ENCODE measurements at regions of chr14 and their contacts with region 1.

Region 1: GRCh38 chr14:75002392-75003249 is at the start of gene EIF2B2:
- DNase-seq: peak; percentile 99
- H3K4me3 ChIP-seq: peak within 1 kb of the TSS; percentile 70 to 89
- H3K4me3 Mint-ChIP-seq: peak within 1 kb of the TSS; percentile 93 to 98 (median 97)
- H3K27ac ChIP-seq: peak within 1 kb of the TSS; percentile 80
- H3K27ac Mint-ChIP-seq: peak within 1 kb of the TSS; percentile 94 to 100 (median 99)
- H3K4me1 ChIP-seq: peaks cover 25% of the 10 kb centered on the region
- H3K4me1 Mint-ChIP-seq: peaks cover 30 to 48% (median 38%) of the 10 kb centered on the region in 4 donors
- H3K27me3 ChIP-seq: no peaks in the 10 kb centered on the region
- H3K27me3 Mint-ChIP-seq: no peaks in the 10 kb centered on the region
- total RNA-seq, gene EIF2B2: 31.3 to 31.7 TPM

Region 2: DNA sequence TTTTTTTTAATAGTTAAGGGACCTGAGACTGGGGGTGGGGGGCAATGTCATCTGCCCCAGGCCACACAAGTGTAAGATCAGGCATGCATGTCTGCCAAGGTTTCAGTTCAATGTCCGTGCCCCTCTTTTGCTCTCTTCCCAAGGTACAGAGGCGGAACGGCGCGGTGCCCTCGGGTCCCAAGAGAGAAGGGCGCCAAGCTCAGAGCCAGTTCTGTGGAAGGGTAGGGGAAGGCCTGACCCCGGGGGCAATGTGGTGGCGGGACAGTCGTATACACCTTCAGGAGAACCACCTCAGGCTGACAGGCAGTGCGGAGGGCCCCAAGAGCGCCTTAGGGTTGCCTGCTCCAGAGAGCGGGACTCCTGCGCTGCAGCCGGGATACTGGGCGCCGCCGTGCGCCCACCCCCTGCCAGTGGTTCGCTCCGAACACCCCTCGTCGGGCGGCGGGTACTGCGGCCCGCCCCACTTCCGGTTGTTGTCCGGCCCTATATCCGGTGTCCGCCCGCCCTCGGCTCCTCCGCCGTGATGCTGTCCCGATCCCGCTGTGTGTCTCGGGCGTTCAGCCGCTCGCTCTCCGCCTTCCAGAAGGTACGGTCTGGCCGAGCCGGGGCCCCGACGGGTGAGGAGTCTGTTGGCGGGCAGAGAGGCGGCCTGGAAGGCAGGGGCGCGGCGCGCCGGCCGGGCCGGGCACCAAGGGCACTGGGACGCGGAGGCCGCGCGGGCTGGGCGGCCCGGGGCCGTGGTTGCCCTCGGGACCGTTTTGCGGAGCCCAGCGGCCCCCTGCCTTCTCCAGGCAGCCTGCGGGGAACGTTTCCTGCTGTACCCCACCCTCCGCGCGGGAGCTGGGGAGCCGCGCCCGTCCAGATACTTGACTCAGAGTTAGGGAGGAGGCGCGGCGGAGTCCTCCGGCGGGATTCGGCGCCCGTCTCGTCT is 120.9 kb before region 1 on chr14 and contains the start of gene DLST:
- CTCF ChIA-PET with region 1: no interaction called
- POLR2A ChIA-PET with region 1: interaction called, 6 read pairs
- intact Hi-C with region 1: loop called (anchors 1 kb)
- DNase-seq: peak; percentile 82 to 87 (median 83)
- H3K4me3 ChIP-seq: peak within 1 kb of the TSS; percentile 44 to 98
- H3K4me3 Mint-ChIP-seq: peak within 1 kb of the TSS; percentile 96 to 100 (median 99)
- H3K27ac ChIP-seq: peak within 1 kb of the TSS; percentile 87
- H3K27ac Mint-ChIP-seq: peak within 1 kb of the TSS; percentile 93 to 100 (median 100)
- H3K4me1 ChIP-seq: peaks cover 53% of the 10 kb centered on the region
- H3K4me1 Mint-ChIP-seq: peaks cover 48 to 75% (median 62%) of the 10 kb centered on the region in 4 donors
- H3K27me3 ChIP-seq: no peaks in the 10 kb centered on the region
- H3K27me3 Mint-ChIP-seq: no peaks in the 10 kb centered on the region
- total RNA-seq, gene DLST: 101 to 104 TPM

Region 3: DNA sequence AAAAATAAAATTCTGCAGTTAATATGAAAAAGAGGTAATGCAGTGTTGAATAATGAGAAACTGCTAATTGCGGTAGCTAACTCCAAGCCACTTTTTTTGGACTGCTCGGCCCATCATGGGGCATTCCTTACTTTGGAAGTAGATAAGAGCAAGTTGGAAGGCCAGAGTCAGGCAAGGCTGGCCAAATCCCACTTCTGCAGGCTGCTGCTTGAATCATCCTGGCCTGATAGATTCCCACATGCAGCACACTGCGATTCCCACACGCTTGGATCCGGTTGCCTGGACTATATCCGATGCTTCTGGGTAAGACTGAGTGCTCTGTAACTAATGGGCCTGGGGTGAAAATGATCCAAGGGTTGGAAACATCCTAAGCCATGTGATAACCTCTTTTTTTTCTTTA is 10.7 kb after region 1 on chr14:
- CTCF ChIA-PET with region 1: interaction called, 3 read pairs
- POLR2A ChIA-PET with region 1: interaction called, 10 read pairs
- intact Hi-C with region 1: no loop called
- DNase-seq: no peak
- H3K4me3 ChIP-seq: no peak overlapping the region
- H3K4me3 Mint-ChIP-seq: no peak overlapping the region
- H3K27ac ChIP-seq: no peak overlapping the region
- H3K27ac Mint-ChIP-seq: peak overlapping the region in 5 of 7 donors; percentile 13 to 79 (median 19)
- H3K4me1 ChIP-seq: no peaks in the 10 kb centered on the region
- H3K4me1 Mint-ChIP-seq: peaks cover 10 to 18% (median 14%) of the 10 kb centered on the region in 4 donors
- H3K27me3 ChIP-seq: no peaks in the 10 kb centered on the region
- H3K27me3 Mint-ChIP-seq: no peaks in the 10 kb centered on the region

Region 4: DNA sequence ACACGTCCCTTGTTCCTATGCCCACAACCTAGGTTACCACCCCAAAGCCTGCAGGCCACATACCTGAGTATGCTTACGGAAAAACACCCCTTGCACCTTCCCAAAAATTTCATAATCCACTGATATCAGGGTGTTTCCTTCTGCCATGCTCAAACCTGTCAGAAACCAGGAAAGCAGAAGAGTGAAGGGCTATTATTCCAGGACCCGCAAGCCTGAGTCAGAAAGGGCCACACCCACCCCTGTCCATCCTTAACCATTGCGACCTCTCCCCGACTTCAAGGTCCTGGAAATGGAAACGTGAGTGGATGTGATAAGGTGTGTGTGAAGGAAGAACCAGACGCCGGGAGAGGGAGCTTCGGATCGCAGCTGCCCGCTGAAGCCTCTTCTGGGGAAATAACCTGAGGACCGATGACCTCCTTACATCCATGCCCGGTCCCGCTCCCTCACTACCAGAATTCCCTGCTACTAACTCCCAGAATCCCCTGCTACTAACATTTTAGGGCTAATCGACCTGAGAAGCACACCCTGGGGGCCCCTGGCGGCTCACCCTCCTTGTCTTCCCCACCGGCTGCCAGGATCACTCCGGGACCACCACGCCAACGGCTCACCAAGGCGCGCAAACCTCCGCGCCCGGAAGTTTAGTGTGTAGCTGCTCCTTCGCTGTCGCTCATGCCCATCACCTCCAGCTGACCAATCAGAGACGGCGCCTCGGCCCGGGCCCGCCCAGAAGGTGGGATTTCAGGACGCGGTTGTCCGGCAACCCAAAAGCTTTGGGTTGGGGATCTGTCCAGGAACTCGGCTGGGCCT is 61.0 kb after region 1 on chr14 and contains the start of gene ACYP1:
- CTCF ChIA-PET with region 1: interaction called, 3 read pairs
- POLR2A ChIA-PET with region 1: interaction called, 16 read pairs
- intact Hi-C with region 1: loop called (anchors 1 kb)
- DNase-seq: peak; percentile 85 to 89 (median 87)
- H3K4me3 ChIP-seq: peak within 1 kb of the TSS; percentile 85 to 97
- H3K4me3 Mint-ChIP-seq: peak within 1 kb of the TSS; percentile 96 to 100 (median 99)
- H3K27ac ChIP-seq: peak within 1 kb of the TSS; percentile 76
- H3K27ac Mint-ChIP-seq: peak within 1 kb of the TSS; percentile 92 to 98 (median 97)
- H3K4me1 ChIP-seq: peaks cover 19% of the 10 kb centered on the region
- H3K4me1 Mint-ChIP-seq: peaks cover 16 to 42% (median 24%) of the 10 kb centered on the region in 4 donors
- H3K27me3 ChIP-seq: no peaks in the 10 kb centered on the region
- H3K27me3 Mint-ChIP-seq: no peaks in the 10 kb centered on the region
- total RNA-seq, gene ACYP1: 38.5 to 46.6 TPM

Region 5: GRCh38 chr14:75088574-75089373 is 86.2 kb after region 1 on chr14:
- CTCF ChIA-PET with region 1: interaction called, 10 read pairs
- POLR2A ChIA-PET with region 1: interaction called, 4 read pairs
- intact Hi-C with region 1: no loop called
- DNase-seq: peak; percentile 37 to 48 (median 46)
- H3K4me3 ChIP-seq: no peak overlapping the region
- H3K4me3 Mint-ChIP-seq: no peak overlapping the region
- H3K27ac ChIP-seq: no peak overlapping the region
- H3K27ac Mint-ChIP-seq: peak overlapping the region in 1 of 7 donors; percentile 47
- H3K4me1 ChIP-seq: no peaks in the 10 kb centered on the region
- H3K4me1 Mint-ChIP-seq: no peaks in the 10 kb centered on the region
- H3K27me3 ChIP-seq: no peaks in the 10 kb centered on the region
- H3K27me3 Mint-ChIP-seq: no peaks in the 10 kb centered on the region